Endothelial cell of umbilical vein (primary cell): ENCODE measurements at regions of chr3 and their contacts with region 1.

Region 1: DNA sequence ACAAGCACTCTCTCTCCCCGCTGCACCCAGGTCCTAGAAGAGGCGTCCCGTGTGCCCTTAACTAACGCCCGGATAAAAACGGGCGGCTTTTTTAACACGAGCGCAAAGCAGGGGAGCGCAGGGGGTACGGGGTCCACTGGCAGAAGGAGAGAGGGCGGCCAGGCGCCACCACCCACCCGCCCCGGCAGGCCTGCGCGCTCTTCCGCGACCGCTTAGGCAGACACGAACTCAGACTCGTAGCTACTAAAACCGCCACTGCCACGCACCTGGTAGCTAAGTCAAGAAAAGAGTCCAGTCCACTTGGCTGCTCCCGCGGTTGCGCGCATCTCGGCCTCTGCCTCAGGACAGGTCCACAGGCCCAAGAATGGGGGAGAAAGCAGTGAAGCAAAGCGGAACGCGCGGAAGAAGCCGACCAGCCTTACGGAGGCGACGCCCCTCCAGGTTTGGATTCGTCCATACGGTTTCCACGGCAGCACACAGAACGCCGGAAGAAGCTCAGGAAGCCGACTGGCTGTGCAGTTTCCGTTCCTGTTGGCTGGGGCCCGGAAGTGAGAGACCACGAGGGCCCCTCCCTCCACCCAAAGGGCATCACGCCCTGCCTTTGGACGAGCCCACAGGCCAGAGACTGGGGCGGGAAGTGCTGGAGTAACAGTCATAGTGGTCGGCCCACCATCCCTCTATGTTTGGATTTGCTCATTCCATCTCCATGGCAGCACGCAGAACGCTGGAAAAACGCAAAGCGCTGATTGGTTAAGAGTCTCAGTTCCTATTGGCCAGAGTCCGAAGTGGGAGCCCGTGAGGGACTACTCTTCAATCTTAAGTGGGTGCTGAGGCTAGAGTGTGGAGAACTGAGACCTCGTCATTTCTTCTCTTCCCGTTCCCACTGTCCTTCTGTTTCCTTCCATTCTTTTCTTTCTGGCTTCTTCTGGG is at the start of gene ULK4:
- DNase-seq: peak; percentile 100
- H3K4me3 ChIP-seq: peak within 1 kb of the TSS; percentile 29 to 72 (median 64)
- H3K27ac ChIP-seq: peak within 1 kb of the TSS; percentile 90
- H3K4me1 ChIP-seq: peaks cover 13% of the 10 kb centered on the region
- H3K27me3 ChIP-seq: no peaks in the 10 kb centered on the region
- CTCF ChIP-seq: no peak
- POLR2A ChIP-seq: peak; percentile 63
- total RNA-seq, gene ULK4: 13.1 and 16.0 TPM in 2 replicates

Region 2: DNA sequence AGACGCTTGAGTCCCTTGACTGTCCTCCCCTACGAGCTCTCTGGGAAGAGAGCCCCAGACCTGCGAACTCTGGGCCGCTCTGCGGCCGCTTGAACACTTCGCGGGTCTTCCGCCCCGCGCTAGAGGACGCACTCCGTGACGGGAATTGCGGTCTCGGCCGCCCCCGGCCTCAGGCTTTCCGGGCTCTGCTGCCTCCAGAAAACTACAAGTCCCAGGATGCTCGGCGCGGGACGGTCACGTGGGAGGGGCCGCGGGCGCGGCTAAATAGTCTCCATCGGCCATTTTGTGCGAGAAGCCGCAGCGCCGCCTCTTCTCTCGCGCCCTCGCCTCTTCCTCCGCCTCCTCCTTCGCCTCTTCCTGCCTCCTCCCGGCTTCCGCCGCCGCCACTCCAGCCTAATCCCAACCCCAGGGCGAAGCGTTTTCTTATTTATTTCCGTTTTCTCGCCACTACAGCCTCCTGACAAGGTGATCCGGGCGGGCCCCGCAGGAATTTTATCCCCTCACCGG is 1652.5 kb before region 1 on chr3 and contains the start of gene EIF1B:
- CTCF ChIA-PET with region 1: no interaction called
- POLR2A ChIA-PET with region 1: no interaction called
- dilution Hi-C with region 1: no loop called
- intact Hi-C with region 1: loop called (anchors 5 kb)
- DNase-seq: peak; percentile 99
- H3K4me3 ChIP-seq: peak within 1 kb of the TSS; percentile 85 to 100 (median 98)
- H3K27ac ChIP-seq: peak within 1 kb of the TSS; percentile 93
- H3K4me1 ChIP-seq: peaks cover 14% of the 10 kb centered on the region
- H3K27me3 ChIP-seq: no peaks in the 10 kb centered on the region
- CTCF ChIP-seq: peak; percentile 96 to 97
- POLR2A ChIP-seq: peak; percentile 96
- total RNA-seq, gene EIF1B: 44.1 and 46.0 TPM in 2 replicates

Region 3: GRCh38 chr3:41893977-41894376 is 68.0 kb before region 1 on chr3:
- CTCF ChIA-PET with region 1: no interaction called
- POLR2A ChIA-PET with region 1: no interaction called
- dilution Hi-C with region 1: no loop called
- intact Hi-C with region 1: loop called (anchors 2 kb)
- DNase-seq: peak; percentile 75
- H3K4me3 ChIP-seq: no peak overlapping the region
- H3K27ac ChIP-seq: no peak overlapping the region
- H3K4me1 ChIP-seq: no peaks in the 10 kb centered on the region
- H3K27me3 ChIP-seq: no peaks in the 10 kb centered on the region
- CTCF ChIP-seq: peak; percentile 14 to 22
- POLR2A ChIP-seq: no peak

Region 4: GRCh38 chr3:42043027-42043796 is 81.2 kb after region 1 on chr3:
- CTCF ChIA-PET with region 1: no interaction called
- POLR2A ChIA-PET with region 1: no interaction called
- dilution Hi-C with region 1: no loop called
- intact Hi-C with region 1: loop called (anchors 1 kb)
- DNase-seq: peak; percentile 98
- H3K4me3 ChIP-seq: no peak overlapping the region
- H3K27ac ChIP-seq: peak overlapping the region; percentile 91
- H3K4me1 ChIP-seq: peaks cover 35% of the 10 kb centered on the region
- H3K27me3 ChIP-seq: no peaks in the 10 kb centered on the region
- CTCF ChIP-seq: no peak
- POLR2A ChIP-seq: peak; percentile 32

Region 5: DNA sequence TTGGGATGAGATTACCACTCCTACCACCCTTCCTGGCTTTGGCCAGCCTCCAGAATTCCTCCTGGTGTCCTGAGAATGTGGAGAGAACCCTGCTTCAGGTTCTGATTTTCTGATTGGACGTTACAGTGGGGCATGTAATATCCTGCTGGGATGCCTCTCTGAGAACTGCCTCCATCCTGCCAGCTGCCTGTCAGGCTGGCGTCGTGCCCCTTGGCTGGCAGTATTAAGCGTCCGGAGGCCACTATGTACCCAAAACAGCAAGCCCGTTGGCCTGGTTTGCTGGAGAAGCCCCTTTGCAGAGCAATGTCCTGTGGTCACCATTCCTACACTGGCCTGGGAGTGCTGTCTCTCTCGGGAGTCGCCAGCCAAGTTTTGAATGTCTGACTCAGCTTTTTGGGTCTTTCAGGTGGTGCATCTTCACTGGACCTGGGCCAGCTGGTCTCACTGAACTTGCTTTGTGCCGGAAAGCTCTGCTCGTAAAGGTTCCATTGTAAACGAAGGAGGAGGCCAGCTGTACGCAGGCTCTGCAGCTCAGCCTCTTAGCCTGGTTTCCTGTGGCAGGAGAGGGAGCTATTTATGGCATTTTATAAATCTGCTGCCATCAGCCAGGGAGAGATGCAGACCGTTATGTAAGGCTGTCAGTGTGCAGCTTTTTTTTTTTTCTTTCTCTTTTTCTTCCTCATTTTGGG is 110.0 kb after region 1 on chr3:
- CTCF ChIA-PET with region 1: no interaction called
- POLR2A ChIA-PET with region 1: interaction called, 4 read pairs
- dilution Hi-C with region 1: no loop called
- intact Hi-C with region 1: loop called (anchors 1 kb)
- DNase-seq: peak; percentile 98
- H3K4me3 ChIP-seq: peak overlapping the region in 1 of 3 experiments; percentile 20
- H3K27ac ChIP-seq: peak overlapping the region; percentile 67
- H3K4me1 ChIP-seq: peaks cover 26% of the 10 kb centered on the region
- H3K27me3 ChIP-seq: no peaks in the 10 kb centered on the region
- CTCF ChIP-seq: no peak
- POLR2A ChIP-seq: no peak

Region 6: GRCh38 chr3:42184651-42185443 is 222.8 kb after region 1 on chr3:
- CTCF ChIA-PET with region 1: no interaction called
- POLR2A ChIA-PET with region 1: no interaction called
- dilution Hi-C with region 1: no loop called
- intact Hi-C with region 1: loop called (anchors 2 kb)
- DNase-seq: peak; percentile 84
- H3K4me3 ChIP-seq: no peak overlapping the region
- H3K27ac ChIP-seq: peak overlapping the region; percentile 95
- H3K4me1 ChIP-seq: peaks cover 21% of the 10 kb centered on the region
- H3K27me3 ChIP-seq: no peaks in the 10 kb centered on the region
- CTCF ChIP-seq: no peak
- POLR2A ChIP-seq: no peak